Calu3 (cell line): ENCODE measurements at regions of chr12 and their contacts with region 1.

Region 1: GRCh38 chr12:65986047-65986446 is 144.5 kb downstream of the LLPH start:
- DNase-seq: no peak
- H3K4me3 Mint-ChIP-seq: no peak overlapping the region
- H3K27ac Mint-ChIP-seq: no peak overlapping the region
- H3K4me1 Mint-ChIP-seq: no peaks in the 10 kb centered on the region
- H3K27me3 Mint-ChIP-seq: no peaks in the 10 kb centered on the region
- CTCF ChIP-seq: no peak

Region 2: DNA sequence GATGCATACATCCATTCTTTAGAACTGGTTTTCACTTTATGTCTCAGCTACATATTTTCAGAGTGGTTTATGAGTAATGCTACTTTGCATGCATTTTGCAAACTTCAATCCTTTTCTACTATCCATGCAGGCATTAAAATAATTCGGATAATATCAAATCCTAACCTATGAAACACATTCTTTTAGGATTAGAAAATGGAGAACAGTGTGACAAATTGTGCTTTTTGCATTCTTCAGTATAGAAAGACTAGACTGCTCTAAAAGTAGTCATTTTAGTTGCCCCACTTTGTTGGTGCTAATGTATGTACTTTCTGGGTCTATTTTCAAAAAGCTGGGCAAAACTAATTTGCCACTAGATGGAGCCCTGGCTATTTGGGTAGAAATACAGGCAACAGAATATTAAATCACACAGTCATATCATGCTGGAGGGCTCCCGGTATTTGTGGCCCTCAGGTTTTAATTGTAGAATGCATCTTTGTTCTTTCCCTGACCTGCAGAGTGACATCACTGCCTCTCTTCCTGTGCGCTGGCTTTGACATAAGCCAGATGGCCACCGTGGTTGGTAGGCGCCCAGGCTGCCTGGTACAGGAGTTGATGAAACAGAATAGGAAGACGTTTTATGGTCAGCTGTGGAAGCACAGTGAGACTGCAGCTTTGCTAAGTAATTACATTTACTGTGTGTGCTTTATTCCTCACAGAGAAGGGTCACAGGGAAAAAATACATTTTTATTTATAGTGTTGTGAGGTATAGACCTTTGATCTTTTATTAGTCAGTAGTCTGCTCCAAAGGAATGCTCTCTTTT is 679.5 kb before region 1 on chr12:
- CTCF ChIA-PET with region 1: interaction called, 5 read pairs
- intact Hi-C with region 1: loop called (anchors 5 kb)
- DNase-seq: peak; percentile 54
- H3K4me3 Mint-ChIP-seq: peak overlapping the region; percentile 25
- H3K27ac Mint-ChIP-seq: peak overlapping the region; percentile 33
- H3K4me1 Mint-ChIP-seq: peaks cover 12% of the 10 kb centered on the region
- H3K27me3 Mint-ChIP-seq: peaks cover 15% of the 10 kb centered on the region
- CTCF ChIP-seq: peak; percentile 77

Region 3: GRCh38 chr12:65609359-65609771 is 376.7 kb before region 1 on chr12:
- CTCF ChIA-PET with region 1: no interaction called
- intact Hi-C with region 1: loop called (anchors 2 kb)
- DNase-seq: peak; percentile 44
- H3K4me3 Mint-ChIP-seq: no peak overlapping the region
- H3K27ac Mint-ChIP-seq: peak overlapping the region; percentile 67
- H3K4me1 Mint-ChIP-seq: peaks cover 67% of the 10 kb centered on the region
- H3K27me3 Mint-ChIP-seq: no peaks in the 10 kb centered on the region
- CTCF ChIP-seq: no peak

Region 4: GRCh38 chr12:65878544-65878943 is 107.5 kb before region 1 on chr12:
- CTCF ChIA-PET with region 1: no interaction called
- intact Hi-C with region 1: loop called (anchors 2 kb)
- DNase-seq: peak; percentile 46
- H3K4me3 Mint-ChIP-seq: no peak overlapping the region
- H3K27ac Mint-ChIP-seq: no peak overlapping the region
- H3K4me1 Mint-ChIP-seq: peaks cover 41% of the 10 kb centered on the region
- H3K27me3 Mint-ChIP-seq: no peaks in the 10 kb centered on the region
- CTCF ChIP-seq: no peak

Region 5: DNA sequence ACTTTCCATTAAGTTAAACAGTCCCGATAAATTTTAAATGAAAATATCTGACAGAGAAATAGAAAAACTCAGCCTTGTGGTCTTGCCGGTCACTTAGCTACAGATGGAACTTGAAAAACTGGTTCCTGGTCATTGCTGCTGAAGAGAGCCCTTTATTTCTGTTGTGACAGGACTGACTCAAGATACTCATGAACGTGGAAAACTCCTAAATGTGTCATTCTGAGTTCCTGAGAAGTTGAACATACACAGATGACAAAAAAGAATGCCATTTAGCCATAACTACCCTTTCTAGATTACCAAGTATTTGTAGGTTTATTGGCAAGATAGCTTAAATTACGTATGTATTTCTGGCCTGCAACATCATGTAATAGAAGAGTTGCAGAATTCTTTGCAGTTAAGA is 27.6 kb before region 1 on chr12:
- CTCF ChIA-PET with region 1: no interaction called
- intact Hi-C with region 1: loop called (anchors 2 kb)
- DNase-seq: peak; percentile 47
- H3K4me3 Mint-ChIP-seq: peak overlapping the region; percentile 41
- H3K27ac Mint-ChIP-seq: peak overlapping the region; percentile 92
- H3K4me1 Mint-ChIP-seq: peaks cover 51% of the 10 kb centered on the region
- H3K27me3 Mint-ChIP-seq: no peaks in the 10 kb centered on the region
- CTCF ChIP-seq: no peak

Region 6: DNA sequence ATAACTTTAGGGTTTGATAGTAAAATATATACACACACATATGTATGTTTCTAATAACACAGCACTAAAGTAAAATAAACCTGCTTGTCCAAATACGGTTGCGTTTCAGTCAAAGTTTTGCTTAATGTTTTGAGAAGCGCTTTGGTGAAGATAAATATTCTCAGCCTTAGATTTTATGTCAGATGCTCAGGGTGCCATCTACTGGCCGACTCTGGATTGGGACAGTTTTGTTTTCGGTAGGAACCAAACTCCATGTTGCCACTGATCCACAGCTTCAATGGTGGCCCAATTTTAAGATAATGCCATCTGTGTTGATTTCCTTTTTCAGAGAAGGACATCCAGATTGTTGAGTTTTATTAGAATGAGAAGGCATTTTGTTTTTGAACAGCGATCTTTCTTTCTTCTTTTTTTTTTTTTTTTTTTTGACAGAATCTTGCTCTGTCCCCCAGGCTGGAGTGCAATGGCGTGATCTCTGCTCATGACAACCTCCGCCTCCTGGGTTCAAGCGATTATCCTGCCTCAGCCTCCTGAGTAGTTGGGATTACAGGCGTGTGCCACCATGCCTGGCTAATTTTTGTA is 101.4 kb after region 1 on chr12:
- CTCF ChIA-PET with region 1: interaction called, 4 read pairs
- intact Hi-C with region 1: loop called (anchors 5 kb)
- DNase-seq: peak; percentile 72
- H3K4me3 Mint-ChIP-seq: no peak overlapping the region
- H3K27ac Mint-ChIP-seq: no peak overlapping the region
- H3K4me1 Mint-ChIP-seq: peaks cover under 1% of the 10 kb centered on the region
- H3K27me3 Mint-ChIP-seq: no peaks in the 10 kb centered on the region
- CTCF ChIP-seq: peak; percentile 68